A673 (cell line): ENCODE measurements at regions of chr1 and their contacts with region 1.

Region 1: DNA sequence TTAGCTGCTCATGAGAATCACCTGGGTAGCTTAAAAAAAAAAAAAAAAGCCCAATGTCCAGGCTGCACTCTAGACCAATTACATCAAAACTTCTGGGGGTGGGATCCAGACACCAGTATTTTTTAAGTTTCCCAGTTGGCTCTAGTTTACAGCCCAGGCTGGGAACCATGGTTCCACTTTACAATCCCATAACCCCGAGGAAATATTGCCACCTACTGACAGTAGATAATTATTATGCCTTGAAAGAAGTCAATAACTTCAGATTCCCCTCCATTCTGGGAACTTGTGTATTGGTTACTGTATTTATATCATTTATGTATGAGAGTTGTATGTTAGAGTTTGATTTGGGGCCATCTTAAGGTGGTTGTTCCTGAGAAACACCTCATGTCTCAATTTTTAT is 100.2 kb downstream of the SPATA46 start:
- DNase-seq: peak; percentile 81
- H3K4me3 ChIP-seq: no peak overlapping the region
- H3K27ac ChIP-seq: peak overlapping the region; percentile 32
- H3K4me1 ChIP-seq: peaks cover 57% of the 10 kb centered on the region
- H3K27me3 ChIP-seq: no peaks in the 10 kb centered on the region
- CTCF ChIP-seq: peak; percentile 62

Region 2: GRCh38 chr1:161766102-161766981 is 510.2 kb before region 1 on chr1 and contains the start of gene ATF6:
- CTCF ChIA-PET with region 1: no interaction called
- POLR2A ChIA-PET with region 1: no interaction called
- intact Hi-C with region 1: loop called (anchors 10 kb)
- DNase-seq: peak; percentile 96
- H3K4me3 ChIP-seq: peak within 1 kb of the TSS; percentile 67
- H3K27ac ChIP-seq: peak within 1 kb of the TSS; percentile 84
- H3K4me1 ChIP-seq: peaks cover 9% of the 10 kb centered on the region
- H3K27me3 ChIP-seq: no peaks in the 10 kb centered on the region
- CTCF ChIP-seq: no peak
- total RNA-seq, gene ATF6: 21.8 and 24.4 TPM in 2 replicates

Region 3: GRCh38 chr1:161792740-161793139 is 483.8 kb before region 1 on chr1:
- CTCF ChIA-PET with region 1: no interaction called
- POLR2A ChIA-PET with region 1: no interaction called
- intact Hi-C with region 1: loop called (anchors 5 kb)
- DNase-seq: peak; percentile 85
- H3K4me3 ChIP-seq: no peak overlapping the region
- H3K27ac ChIP-seq: no peak overlapping the region
- H3K4me1 ChIP-seq: no peaks in the 10 kb centered on the region
- H3K27me3 ChIP-seq: no peaks in the 10 kb centered on the region
- CTCF ChIP-seq: peak; percentile 69

Region 4: DNA sequence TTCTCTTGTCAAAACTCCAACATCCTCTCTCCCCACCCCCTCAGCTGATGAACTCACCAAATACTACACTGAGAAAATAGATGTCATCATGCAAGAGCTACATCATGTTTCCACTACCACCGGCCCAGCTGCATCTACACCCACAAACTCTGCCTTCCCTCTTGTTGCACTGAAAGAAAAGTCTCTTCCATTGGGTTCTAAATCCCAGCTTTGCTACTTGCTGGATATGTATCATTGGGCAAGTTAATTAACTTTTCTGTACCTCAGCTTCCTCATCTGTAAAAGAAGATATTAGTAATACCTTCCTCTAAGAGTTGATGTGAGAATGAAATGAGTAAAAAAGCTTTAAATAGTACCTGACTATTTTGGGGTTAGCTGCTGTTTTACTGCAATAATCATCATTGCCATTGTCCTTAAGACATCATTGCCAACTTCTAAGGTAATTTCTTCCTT is 361.4 kb before region 1 on chr1:
- CTCF ChIA-PET with region 1: no interaction called
- POLR2A ChIA-PET with region 1: no interaction called
- intact Hi-C with region 1: no loop called
- DNase-seq: no peak
- H3K4me3 ChIP-seq: no peak overlapping the region
- H3K27ac ChIP-seq: no peak overlapping the region
- H3K4me1 ChIP-seq: no peaks in the 10 kb centered on the region
- H3K27me3 ChIP-seq: no peaks in the 10 kb centered on the region
- CTCF ChIP-seq: no peak

Region 5: GRCh38 chr1:162056043-162056442 is 220.4 kb before region 1 on chr1:
- CTCF ChIA-PET with region 1: interaction called, 20 read pairs
- POLR2A ChIA-PET with region 1: no interaction called
- intact Hi-C with region 1: loop called (anchors 1 kb)
- DNase-seq: peak; percentile 87
- H3K4me3 ChIP-seq: no peak overlapping the region
- H3K27ac ChIP-seq: peak overlapping the region; percentile 38
- H3K4me1 ChIP-seq: peaks cover 16% of the 10 kb centered on the region
- H3K27me3 ChIP-seq: no peaks in the 10 kb centered on the region
- CTCF ChIP-seq: peak; percentile 97

Region 6: GRCh38 chr1:162145280-162145965 is 131.1 kb before region 1 on chr1:
- CTCF ChIA-PET with region 1: no interaction called
- POLR2A ChIA-PET with region 1: no interaction called
- intact Hi-C with region 1: loop called (anchors 5 kb)
- DNase-seq: peak; percentile 86
- H3K4me3 ChIP-seq: peak overlapping the region; percentile 17
- H3K27ac ChIP-seq: peak overlapping the region; percentile 95
- H3K4me1 ChIP-seq: peaks cover 68% of the 10 kb centered on the region
- H3K27me3 ChIP-seq: no peaks in the 10 kb centered on the region
- CTCF ChIP-seq: no peak

Region 7: DNA sequence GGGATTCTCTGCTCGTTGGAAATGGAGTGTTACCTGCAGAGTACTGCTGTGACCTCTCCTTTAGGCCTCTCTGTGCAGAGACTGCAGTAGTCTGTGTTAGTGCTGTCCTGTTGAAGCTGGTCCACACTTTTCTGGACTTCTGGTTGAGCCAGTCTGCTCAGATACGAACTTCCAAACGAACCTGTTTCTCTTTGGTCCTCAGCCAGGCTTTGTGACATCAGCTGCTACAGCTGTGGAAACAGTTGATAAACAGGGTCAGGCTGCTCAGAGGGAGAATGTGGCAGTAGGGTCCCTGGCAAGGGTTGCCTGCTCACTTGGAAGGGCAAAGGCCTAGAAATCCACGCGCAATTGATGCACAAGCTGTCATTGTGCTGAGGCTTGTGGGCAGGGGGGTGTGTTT is 108.2 kb before region 1 on chr1:
- CTCF ChIA-PET with region 1: no interaction called
- POLR2A ChIA-PET with region 1: no interaction called
- intact Hi-C with region 1: loop called (anchors 5 kb)
- DNase-seq: no peak
- H3K4me3 ChIP-seq: no peak overlapping the region
- H3K27ac ChIP-seq: peak overlapping the region; percentile 78
- H3K4me1 ChIP-seq: peaks cover 70% of the 10 kb centered on the region
- H3K27me3 ChIP-seq: no peaks in the 10 kb centered on the region
- CTCF ChIP-seq: no peak

Region 8: GRCh38 chr1:162319493-162320175 is 43.1 kb after region 1 on chr1:
- CTCF ChIA-PET with region 1: no interaction called
- POLR2A ChIA-PET with region 1: no interaction called
- intact Hi-C with region 1: no loop called
- DNase-seq: no peak
- H3K4me3 ChIP-seq: no peak overlapping the region
- H3K27ac ChIP-seq: no peak overlapping the region
- H3K4me1 ChIP-seq: peaks cover 8% of the 10 kb centered on the region
- H3K27me3 ChIP-seq: no peaks in the 10 kb centered on the region
- CTCF ChIP-seq: no peak

Region 9: DNA sequence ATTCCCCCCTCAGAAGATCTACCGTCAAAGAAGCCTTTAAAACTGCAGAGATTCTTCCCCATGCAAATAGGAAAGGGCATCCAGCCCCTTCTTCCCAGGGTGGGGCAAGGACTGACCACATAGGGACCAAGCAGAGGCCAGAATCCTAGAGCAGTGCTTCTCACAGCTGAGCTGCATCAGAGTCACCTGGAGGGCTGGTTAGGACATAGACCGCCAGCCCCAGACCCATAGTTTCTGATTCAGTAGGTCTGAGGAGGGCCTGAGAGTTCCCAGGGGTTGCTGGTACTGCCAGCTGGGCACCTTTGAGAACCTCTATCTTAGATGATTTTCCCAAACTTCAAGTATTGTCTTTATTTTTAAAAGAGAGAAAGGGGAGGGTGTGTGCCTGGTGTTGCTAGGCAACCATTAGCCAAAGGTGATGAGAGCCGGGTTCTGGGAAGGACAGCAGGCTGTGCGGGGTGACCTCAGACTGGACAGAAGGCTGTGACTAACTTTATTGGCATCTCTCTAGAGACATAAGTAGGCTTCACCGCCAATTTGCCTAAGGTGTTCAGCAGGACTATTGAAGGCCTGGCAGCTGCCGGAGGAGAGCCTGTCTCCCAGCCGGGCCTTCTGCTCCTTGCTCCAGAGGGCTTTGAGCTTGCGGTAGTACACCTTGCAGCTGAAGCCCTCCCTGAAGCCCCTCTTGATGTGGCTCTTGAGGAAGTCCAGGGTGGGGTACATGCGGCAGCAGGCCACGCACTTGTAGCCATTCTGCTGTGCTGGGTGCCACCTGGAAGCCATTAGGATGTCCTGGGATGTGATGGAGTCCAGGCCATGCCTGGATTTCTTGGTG is 97.3 kb after region 1 on chr1:
- CTCF ChIA-PET with region 1: no interaction called
- POLR2A ChIA-PET with region 1: no interaction called
- intact Hi-C with region 1: no loop called
- DNase-seq: no peak
- H3K4me3 ChIP-seq: no peak overlapping the region
- H3K27ac ChIP-seq: no peak overlapping the region
- H3K4me1 ChIP-seq: no peaks in the 10 kb centered on the region
- H3K27me3 ChIP-seq: no peaks in the 10 kb centered on the region
- CTCF ChIP-seq: no peak